ENCODE measurements at regions of chr3 and their contacts with region 1.

Region 1: GRCh38 chr3:29280404-29281093 is at the start of gene RBMS3:
- DNase-seq: peak; percentile 95
- H3K4me3 ChIP-seq: peak within 1 kb of the TSS; percentile 58 to 94 (median 77)
- H3K27ac ChIP-seq: peak within 1 kb of the TSS; percentile 97
- H3K4me1 ChIP-seq: peaks cover 31% of the 10 kb centered on the region
- H3K27me3 ChIP-seq: no peaks in the 10 kb centered on the region
- CTCF ChIP-seq: peak; percentile 35 to 66
- POLR2A ChIP-seq: no peak
- total RNA-seq, gene RBMS3: 37.3 and 42.3 TPM in 2 replicates

Region 2: DNA sequence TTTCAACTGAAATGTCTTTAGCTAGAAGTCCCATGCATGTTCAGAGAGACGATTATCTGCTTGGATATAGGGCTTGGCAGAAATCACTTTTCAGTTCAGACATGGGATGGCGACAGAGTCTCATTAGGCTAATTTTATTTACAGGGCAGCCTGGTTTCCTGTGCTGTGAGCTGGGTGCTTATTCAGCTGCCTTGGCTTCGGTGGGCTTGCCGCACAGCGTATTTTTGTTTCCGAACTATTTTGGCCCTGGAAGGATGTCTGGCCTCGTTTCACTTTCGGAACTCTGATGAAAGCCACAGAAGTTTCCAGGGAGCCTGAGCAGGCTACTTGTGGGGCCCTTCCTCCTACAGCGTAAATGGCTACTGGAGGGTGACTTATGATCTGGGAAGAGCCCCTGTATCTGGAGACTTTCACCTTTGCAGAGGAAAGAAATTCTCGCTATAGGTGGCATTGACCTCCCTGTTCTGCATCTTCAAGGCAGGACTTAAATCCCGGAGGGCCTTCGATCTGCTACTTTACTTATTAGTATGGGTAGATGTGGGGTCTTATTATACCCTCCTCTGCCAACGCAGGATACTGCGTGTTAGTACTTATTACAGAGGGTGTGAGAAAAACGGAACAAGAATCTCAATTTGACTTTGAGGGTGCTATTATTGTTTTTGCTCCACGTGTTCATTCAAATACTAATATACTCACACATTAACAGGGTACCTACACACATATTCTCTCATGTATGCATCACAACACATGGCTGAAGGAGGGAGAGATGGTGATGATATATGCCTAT is 363.6 kb before region 1 on chr3:
- CTCF ChIA-PET with region 1: interaction called, 43 read pairs
- POLR2A ChIA-PET with region 1: no interaction called
- dilution Hi-C with region 1: no loop called
- intact Hi-C with region 1: loop called (anchors 1 kb)
- DNase-seq: peak; percentile 96
- H3K4me3 ChIP-seq: peak overlapping the region; percentile 3 to 73 (median 45)
- H3K27ac ChIP-seq: peak overlapping the region; percentile 57
- H3K4me1 ChIP-seq: peaks cover 9% of the 10 kb centered on the region
- H3K27me3 ChIP-seq: no peaks in the 10 kb centered on the region
- CTCF ChIP-seq: peak; percentile 65 to 71
- POLR2A ChIP-seq: no peak

Region 3: GRCh38 chr3:29011441-29011840 is 269.1 kb before region 1 on chr3:
- CTCF ChIA-PET with region 1: no interaction called
- POLR2A ChIA-PET with region 1: no interaction called
- dilution Hi-C with region 1: no loop called
- intact Hi-C with region 1: no loop called
- DNase-seq: no peak
- H3K4me3 ChIP-seq: no peak overlapping the region
- H3K27ac ChIP-seq: no peak overlapping the region
- H3K4me1 ChIP-seq: no peaks in the 10 kb centered on the region
- H3K27me3 ChIP-seq: no peaks in the 10 kb centered on the region
- CTCF ChIP-seq: no peak
- POLR2A ChIP-seq: no peak

Region 4: GRCh38 chr3:29144807-29145206 is 135.7 kb before region 1 on chr3:
- CTCF ChIA-PET with region 1: no interaction called
- POLR2A ChIA-PET with region 1: no interaction called
- dilution Hi-C with region 1: no loop called
- intact Hi-C with region 1: loop called (anchors 2 kb)
- DNase-seq: peak; percentile 58
- H3K4me3 ChIP-seq: no peak overlapping the region
- H3K27ac ChIP-seq: no peak overlapping the region
- H3K4me1 ChIP-seq: peaks cover 20% of the 10 kb centered on the region
- H3K27me3 ChIP-seq: no peaks in the 10 kb centered on the region
- CTCF ChIP-seq: no peak
- POLR2A ChIP-seq: no peak

Region 5: DNA sequence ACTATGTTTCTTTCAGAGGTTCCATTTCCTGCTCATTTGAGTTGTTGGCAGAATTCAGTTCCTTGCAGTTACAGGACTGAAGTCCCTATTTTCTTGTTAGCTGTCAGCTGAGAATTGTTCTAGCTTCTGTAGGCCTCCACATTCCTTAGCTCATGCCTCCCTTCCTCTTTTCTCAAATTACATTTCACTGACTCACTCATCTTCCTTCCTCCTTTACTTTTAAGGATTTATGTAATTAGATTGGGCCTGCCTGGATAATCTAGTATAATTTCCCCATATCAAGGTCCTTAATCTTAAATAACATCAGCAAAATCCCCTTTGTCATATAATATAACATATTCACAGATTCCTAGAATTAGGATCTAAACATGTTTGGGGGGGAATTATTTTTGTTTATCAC is 40.3 kb before region 1 on chr3:
- CTCF ChIA-PET with region 1: no interaction called
- POLR2A ChIA-PET with region 1: no interaction called
- dilution Hi-C with region 1: no loop called
- intact Hi-C with region 1: loop called (anchors 1 kb)
- DNase-seq: peak; percentile 86
- H3K4me3 ChIP-seq: no peak overlapping the region
- H3K27ac ChIP-seq: peak overlapping the region; percentile 70
- H3K4me1 ChIP-seq: peaks cover 17% of the 10 kb centered on the region
- H3K27me3 ChIP-seq: no peaks in the 10 kb centered on the region
- CTCF ChIP-seq: no peak
- POLR2A ChIP-seq: no peak

Region 6: DNA sequence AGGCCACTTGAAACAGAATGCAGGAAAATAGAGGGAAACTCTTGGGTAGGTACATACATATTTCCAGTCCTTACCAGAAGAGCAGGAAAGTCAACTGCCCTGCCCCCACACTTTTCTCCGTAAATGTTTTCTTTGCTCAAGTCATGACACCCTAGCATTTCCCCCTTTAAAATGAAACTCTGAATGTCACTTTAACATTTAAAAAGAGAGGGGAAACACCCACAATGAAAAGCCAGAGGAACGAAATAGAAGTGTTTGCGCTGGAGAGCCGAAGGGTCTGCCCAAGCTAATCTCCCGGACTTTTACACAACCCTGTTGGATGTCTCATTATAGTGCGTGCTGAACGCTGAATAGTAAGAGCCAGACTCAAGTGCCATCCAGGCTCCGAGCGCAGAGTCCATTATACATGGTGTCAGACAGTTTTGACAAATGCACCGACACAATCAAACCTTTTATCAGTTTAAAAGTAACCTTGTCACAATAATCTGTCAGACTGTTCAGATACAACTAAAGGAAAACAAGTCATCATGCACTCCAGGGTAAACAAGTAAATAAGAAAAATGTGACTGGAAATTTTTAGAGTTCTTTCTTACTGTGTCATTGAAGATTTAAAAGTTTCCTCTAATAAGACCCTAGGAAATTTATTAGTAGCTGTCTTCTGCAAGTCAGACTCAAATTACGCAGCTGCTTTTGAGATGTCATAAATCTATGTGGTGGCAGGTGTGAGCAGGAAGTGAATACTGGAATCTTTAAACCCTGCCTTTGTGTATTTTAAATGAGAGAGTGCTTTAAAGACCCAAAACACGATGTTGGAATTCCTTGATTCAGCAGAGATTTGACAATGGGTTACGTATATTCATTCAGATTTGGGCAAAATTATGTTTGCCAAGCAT is 160.1 kb after region 1 on chr3:
- CTCF ChIA-PET with region 1: no interaction called
- POLR2A ChIA-PET with region 1: no interaction called
- dilution Hi-C with region 1: no loop called
- intact Hi-C with region 1: loop called (anchors 5 kb)
- DNase-seq: peak; percentile 59
- H3K4me3 ChIP-seq: peak overlapping the region in 2 of 3 experiments; percentile 21 to 27
- H3K27ac ChIP-seq: peak overlapping the region; percentile 21
- H3K4me1 ChIP-seq: peaks cover 13% of the 10 kb centered on the region
- H3K27me3 ChIP-seq: no peaks in the 10 kb centered on the region
- CTCF ChIP-seq: no peak
- POLR2A ChIP-seq: no peak

Region 7: GRCh38 chr3:29601861-29602585 is 321.5 kb after region 1 on chr3:
- CTCF ChIA-PET with region 1: interaction called, 3 read pairs
- POLR2A ChIA-PET with region 1: interaction called, 5 read pairs
- dilution Hi-C with region 1: no loop called
- intact Hi-C with region 1: loop called (anchors 2 kb)
- DNase-seq: peak; percentile 97
- H3K4me3 ChIP-seq: no peak overlapping the region
- H3K27ac ChIP-seq: peak overlapping the region; percentile 79
- H3K4me1 ChIP-seq: peaks cover 19% of the 10 kb centered on the region
- H3K27me3 ChIP-seq: no peaks in the 10 kb centered on the region
- CTCF ChIP-seq: no peak
- POLR2A ChIP-seq: peak; percentile 58

Region 8: GRCh38 chr3:29759411-29760225 is 479.1 kb after region 1 on chr3:
- CTCF ChIA-PET with region 1: interaction called, 16 read pairs
- POLR2A ChIA-PET with region 1: interaction called, 5 read pairs
- dilution Hi-C with region 1: no loop called
- intact Hi-C with region 1: loop called (anchors 1 kb)
- DNase-seq: peak; percentile 53
- H3K4me3 ChIP-seq: no peak overlapping the region
- H3K27ac ChIP-seq: peak overlapping the region; percentile 98
- H3K4me1 ChIP-seq: peaks cover 47% of the 10 kb centered on the region
- H3K27me3 ChIP-seq: no peaks in the 10 kb centered on the region
- CTCF ChIP-seq: no peak
- POLR2A ChIP-seq: no peak

Measured in endothelial cell of umbilical vein (primary cell).